WTC11 (cell line): ENCODE measurements at regions of chr3 and their contacts with region 1.

Region 1: DNA sequence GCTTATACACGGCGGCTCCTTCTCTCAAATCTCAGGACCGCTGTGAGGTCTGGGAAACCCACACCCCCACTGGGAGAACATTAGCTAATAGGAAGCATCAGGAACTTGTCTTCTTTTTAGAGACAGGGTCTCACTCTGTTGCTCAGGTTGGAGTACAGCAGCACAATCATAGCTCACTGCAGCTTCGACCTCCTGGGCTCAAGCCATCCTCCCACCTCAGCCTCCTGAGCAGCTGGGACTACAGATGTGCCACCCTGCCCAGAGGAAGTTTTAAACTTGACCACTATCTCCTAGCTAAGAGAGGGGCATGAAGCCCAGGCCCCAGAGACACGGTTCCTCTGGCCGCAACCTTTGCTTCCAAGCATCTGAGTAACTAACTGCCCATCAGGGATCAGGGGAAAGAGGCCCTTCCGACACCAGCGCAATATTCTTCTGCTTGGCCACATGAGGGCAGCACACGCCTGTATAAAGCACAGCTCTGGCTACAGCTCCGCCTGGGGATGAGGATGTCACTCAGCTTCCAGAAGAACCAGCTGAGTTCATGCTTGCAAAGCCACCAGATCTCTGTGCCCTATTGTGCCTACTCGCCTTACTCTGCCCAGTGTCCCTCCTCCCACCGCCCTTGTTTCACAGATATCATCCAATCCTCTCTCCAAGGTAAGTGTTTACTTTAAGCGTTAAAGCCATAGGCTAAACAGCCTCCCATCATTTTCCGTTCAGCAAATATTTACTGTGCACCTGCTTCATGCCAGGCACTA is 57.5 kb upstream of the SLC6A11 start:
- DNase-seq: peak; percentile 69
- ATAC-seq: peak; percentile 92
- H3K4me3 Mint-ChIP-seq: no peak overlapping the region
- H3K27ac Mint-ChIP-seq: no peak overlapping the region
- H3K4me1 Mint-ChIP-seq: peaks cover 8% of the 10 kb centered on the region
- H3K27me3 Mint-ChIP-seq: peaks cover 25% of the 10 kb centered on the region
- CTCF ChIP-seq: peak; percentile 58

Region 2: DNA sequence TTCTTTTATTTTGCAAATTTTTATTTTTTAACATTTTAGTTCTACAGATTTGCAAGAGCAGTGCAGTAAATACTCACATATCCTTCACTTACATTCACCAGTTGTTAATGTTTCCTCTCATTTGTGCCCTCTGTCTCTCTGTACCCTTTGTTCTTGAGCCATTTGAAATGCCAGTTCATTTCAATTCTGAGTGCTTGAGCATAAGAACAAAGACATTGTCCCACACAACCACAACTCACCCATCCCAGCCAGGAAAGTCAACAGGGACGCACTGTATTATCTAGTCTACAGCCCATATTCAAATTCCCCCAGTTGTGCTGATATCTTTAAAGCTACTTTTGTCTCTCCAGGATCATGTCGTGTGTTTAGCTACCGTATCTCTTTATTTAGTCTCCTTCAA is 83.9 kb before region 1 on chr3:
- CTCF ChIA-PET with region 1: no interaction called
- POLR2A ChIA-PET with region 1: no interaction called
- DNase-seq: no peak
- ATAC-seq: no peak
- H3K4me3 Mint-ChIP-seq: no peak overlapping the region
- H3K27ac Mint-ChIP-seq: no peak overlapping the region
- H3K4me1 Mint-ChIP-seq: peaks cover 8% of the 10 kb centered on the region
- H3K27me3 Mint-ChIP-seq: no peaks in the 10 kb centered on the region
- CTCF ChIP-seq: no peak

Region 3: DNA sequence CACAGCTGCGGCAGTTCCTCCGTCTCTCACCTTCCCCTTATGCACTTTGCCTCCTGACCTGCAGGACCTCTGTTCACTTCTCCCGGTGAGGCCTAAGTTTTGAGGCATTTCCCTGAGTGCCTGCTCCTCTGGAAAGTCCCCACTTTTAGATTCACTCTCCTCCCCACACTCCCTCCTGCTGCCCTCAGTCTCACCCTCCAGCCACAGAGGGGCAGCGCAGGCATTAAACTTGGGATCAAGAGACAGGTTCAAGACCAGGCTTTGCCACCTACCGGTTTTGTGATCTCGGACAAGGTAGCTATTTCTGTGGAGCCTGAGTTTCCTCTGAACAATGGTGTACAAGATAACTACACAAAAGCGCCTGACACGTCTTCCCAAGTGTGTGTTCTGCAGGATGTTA is 76.9 kb after region 1 on chr3:
- CTCF ChIA-PET with region 1: interaction called, 10 read pairs
- POLR2A ChIA-PET with region 1: no interaction called
- DNase-seq: peak; percentile 39
- ATAC-seq: peak; percentile 70
- H3K4me3 Mint-ChIP-seq: no peak overlapping the region
- H3K27ac Mint-ChIP-seq: no peak overlapping the region
- H3K4me1 Mint-ChIP-seq: 0 out of 2 replicates have a peak, but pooled peaks cover 7% of the 10 kb centered on the region
- H3K27me3 Mint-ChIP-seq: peaks cover 5% of the 10 kb centered on the region; the same call in 1 of the 2 replicates
- CTCF ChIP-seq: no peak

Region 4: GRCh38 chr3:10883478-10884234 is 125.2 kb after region 1 on chr3:
- CTCF ChIA-PET with region 1: interaction called, 12 read pairs
- POLR2A ChIA-PET with region 1: no interaction called
- DNase-seq: peak; percentile 48
- ATAC-seq: 0 out of 2 replicates have a peak, but pooled peaks have one; percentile 26
- H3K4me3 Mint-ChIP-seq: no peak overlapping the region
- H3K27ac Mint-ChIP-seq: no peak overlapping the region
- H3K4me1 Mint-ChIP-seq: no peaks in the 10 kb centered on the region
- H3K27me3 Mint-ChIP-seq: peaks cover 79% of the 10 kb centered on the region
- CTCF ChIP-seq: peak; percentile 45